ENCODE measurements at regions of chr6 and their contacts with region 1.

Region 1: DNA sequence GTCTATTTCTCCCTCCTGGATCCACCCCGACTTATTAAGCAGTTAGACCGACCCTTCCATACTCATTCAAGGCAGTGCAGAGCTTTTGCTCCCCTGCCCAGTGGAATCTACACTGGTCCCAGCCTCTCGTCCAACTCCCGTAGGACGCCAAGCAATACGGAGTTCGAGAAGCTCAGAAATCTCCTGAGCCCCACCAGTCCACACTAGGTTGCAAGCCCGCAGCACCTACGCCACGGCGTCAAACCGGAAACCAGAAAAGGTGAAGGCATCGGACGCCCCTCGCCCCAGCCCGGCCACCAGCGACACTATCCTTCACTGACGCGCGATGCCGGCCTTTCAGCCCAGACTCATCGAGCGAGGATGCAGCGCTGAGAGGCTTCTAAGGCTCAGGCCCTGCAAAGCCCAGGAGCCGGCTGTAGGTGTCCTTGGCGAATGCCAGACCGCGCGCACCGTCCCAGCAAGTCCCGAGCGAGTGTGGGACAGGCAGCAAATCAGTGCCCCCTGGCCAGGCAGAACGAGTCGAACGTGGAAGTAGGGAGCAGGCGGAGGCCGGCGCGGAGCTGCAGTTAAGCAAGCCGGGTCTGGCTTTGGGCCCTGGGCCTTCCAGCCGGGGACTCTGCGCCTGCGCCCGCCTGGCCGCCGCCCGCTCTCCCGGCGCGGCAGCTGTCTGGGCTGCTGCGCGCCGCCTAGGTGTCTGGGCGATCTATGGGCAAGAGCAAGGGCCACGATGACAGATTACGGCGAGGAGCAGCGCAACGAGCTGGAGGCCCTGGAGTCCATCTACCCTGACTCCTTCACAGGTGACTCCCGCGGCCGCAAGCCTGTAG is at the start of gene RWDD1:
- DNase-seq: peak; percentile 99
- H3K4me3 ChIP-seq: peak within 1 kb of the TSS; percentile 87 to 98 (median 98)
- H3K27ac ChIP-seq: peak within 1 kb of the TSS; percentile 84
- H3K4me1 ChIP-seq: peaks cover 33% of the 10 kb centered on the region
- H3K27me3 ChIP-seq: no peaks in the 10 kb centered on the region
- CTCF ChIP-seq: no peak
- POLR2A ChIP-seq: peak; percentile 89
- total RNA-seq, gene RWDD1: 37.9 and 44.2 TPM in 2 replicates

Region 2: DNA sequence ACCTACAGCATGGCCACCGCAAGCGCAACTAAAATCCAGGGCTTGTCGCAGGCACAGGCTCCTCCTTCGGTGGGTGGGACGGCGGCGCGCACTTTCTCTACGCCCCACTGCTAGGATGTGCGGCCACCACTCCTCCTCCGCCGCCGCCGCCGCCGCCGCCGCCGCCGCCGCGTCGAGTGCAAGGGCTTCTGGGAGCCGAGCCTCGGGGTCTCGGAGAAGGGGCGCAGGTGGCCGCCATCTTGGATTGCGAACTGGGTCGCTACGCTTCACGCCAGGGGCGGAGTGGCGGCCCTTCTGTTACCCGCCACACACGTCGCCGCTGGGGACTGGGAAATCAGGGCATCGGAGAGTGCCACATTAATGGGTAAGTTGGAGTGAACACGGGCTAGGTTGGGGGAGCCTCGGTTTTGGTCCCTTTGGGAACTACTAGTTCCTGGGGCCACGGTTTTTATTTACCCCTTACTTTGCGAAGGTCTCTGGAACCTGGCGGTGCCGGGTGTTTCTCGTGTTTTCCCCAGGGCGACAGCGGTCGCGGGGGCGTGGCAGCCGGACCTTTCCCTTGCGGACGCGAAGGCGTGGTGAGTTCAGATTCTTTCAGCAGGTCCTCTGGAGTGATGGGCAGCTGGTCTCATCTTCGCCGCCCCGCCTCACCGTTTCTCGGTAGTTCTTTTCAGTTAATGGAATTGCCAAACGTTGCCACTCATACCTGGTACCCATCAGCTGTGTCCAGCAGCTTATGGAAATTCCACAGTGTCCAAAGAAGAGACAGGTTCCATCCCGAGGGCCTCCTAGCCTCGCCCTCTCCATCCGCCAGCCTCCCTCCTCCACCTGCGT is 110.1 kb after region 1 on chr6 and contains the start of gene KPNA5:
- CTCF ChIA-PET with region 1: no interaction called
- POLR2A ChIA-PET with region 1: no interaction called
- dilution Hi-C with region 1: no loop called
- intact Hi-C with region 1: loop called (anchors 1 kb)
- DNase-seq: peak; percentile 94
- H3K4me3 ChIP-seq: peak within 1 kb of the TSS; percentile 61 to 85 (median 80)
- H3K27ac ChIP-seq: peak within 1 kb of the TSS; percentile 73
- H3K4me1 ChIP-seq: peaks cover 12% of the 10 kb centered on the region
- H3K27me3 ChIP-seq: no peaks in the 10 kb centered on the region
- CTCF ChIP-seq: no peak
- POLR2A ChIP-seq: peak; percentile 58
- total RNA-seq, gene KPNA5: 7.1 and 8.9 TPM in 2 replicates

Measured in endothelial cell of umbilical vein (primary cell).